ENCODE measurements at regions of chr6 and their contacts with region 1.

Region 1: GRCh38 chr6:129774697-129775447 is 64.9 kb upstream of the ARHGAP18 start:
- H3K4me3 ChIP-seq: peak overlapping the region; percentile 7; the same call in 1 of the 2 replicates
- H3K27ac ChIP-seq: no peak overlapping the region
- H3K4me1 ChIP-seq: no peaks in the 10 kb centered on the region
- CTCF ChIP-seq: peak; percentile 78

Region 2: DNA sequence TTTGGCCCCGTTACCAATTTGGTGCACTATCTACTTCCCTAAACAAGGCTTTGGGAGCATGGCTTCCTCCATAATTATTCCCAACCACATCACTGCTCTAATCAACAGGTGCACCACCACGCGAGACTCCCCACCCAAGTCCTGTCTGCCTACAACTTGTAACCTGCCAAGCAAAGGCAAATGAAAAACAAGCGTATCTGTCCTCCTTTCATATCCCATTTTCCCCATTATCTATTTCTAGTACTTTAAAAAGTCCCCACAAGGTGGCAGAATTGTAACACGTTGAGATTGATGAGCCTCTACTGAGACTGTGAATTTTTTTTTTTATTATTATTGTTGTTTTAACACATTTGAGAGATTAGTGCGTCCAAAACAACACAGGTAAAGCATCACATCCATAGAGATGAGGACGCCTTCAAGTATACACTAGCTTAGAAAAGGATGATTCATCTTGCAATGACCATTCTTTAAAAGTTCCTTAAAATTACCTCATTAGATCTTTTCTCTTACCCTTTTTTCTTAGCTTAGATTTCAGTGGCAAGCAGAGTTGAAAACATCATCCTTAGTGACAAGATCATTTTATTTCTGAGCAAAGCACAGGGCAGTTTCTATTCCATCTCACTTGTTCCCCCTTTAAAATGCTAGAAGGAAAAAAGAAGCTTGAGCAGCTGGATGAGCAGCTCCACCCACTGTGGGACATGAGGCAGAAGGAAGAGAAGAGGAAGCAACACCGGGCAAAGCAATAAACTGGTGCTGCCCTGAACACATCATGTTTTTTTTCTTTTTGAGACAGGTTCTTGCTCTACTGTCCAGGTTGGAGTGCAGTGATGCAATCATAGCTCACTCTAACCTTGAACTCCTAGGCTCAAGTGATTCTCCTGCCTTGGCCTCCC is 275.7 kb before region 1 on chr6:
- CTCF ChIA-PET with region 1: interaction called, 10 read pairs
- POLR2A ChIA-PET with region 1: no interaction called
- H3K4me3 ChIP-seq: no peak overlapping the region
- H3K27ac ChIP-seq: no peak overlapping the region
- H3K4me1 ChIP-seq: peaks cover 3% of the 10 kb centered on the region; the same call in 1 of the 2 replicates
- CTCF ChIP-seq: peak; percentile 30; the same call in 1 of the 2 replicates

Region 3: DNA sequence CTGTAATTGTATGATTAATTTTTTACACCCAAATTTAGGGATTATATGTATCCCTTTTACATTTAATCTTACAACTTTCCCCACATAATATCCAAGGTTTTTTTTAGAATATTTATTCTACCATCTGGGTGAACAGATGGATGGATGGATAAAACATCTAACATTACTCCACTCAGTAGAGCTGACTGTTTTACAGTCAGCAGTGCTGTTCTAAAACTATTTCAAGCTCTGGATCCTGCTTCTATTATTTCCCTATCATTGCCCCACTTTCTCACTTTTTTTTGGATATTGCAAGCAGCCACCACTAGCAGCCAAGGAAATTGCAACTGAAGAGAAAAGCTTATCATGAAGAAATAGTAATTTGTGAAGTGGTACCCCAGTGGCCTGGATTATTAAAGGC is 238.6 kb before region 1 on chr6:
- CTCF ChIA-PET with region 1: no interaction called
- POLR2A ChIA-PET with region 1: no interaction called
- H3K4me3 ChIP-seq: no peak overlapping the region
- H3K27ac ChIP-seq: no peak overlapping the region
- H3K4me1 ChIP-seq: peaks cover 3% of the 10 kb centered on the region; the same call in 1 of the 2 replicates
- CTCF ChIP-seq: no peak

Region 4: DNA sequence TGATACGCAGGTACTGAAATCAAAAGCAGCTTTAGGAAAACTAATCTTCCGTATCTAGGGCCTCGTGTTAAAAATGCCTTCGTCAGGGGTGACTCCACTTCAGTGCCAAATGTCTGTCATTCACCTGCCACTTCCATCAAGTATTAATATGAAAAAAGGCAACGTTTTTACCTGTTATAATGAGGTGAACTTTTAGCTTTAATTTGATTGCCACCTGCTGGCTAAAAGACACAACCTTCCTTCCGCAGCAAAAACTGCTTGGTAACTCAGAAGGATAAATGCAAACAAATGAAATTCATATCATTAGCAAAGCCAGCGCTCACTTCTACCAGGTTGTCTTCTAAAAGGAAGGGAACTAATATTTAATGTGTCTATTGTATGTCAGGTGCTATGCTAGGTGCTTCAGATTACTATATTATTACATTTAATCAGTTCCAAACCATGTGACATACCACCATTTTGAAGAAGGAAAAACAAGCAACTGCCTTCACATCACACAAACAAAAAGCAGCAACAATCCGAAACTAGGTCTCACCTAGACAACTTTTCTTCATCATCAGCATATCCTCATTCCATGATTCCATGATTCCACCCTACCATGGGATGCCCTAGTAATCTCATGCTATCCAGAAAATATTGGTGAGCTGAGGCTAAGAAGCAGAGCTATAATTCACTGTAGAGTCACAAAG is 44.3 kb before region 1 on chr6:
- CTCF ChIA-PET with region 1: interaction called, 43 read pairs
- POLR2A ChIA-PET with region 1: no interaction called
- H3K4me3 ChIP-seq: no peak overlapping the region
- H3K27ac ChIP-seq: no peak overlapping the region
- H3K4me1 ChIP-seq: no peaks in the 10 kb centered on the region
- CTCF ChIP-seq: 0 out of 2 replicates have a peak, but pooled peaks have one; percentile 32

Region 5: DNA sequence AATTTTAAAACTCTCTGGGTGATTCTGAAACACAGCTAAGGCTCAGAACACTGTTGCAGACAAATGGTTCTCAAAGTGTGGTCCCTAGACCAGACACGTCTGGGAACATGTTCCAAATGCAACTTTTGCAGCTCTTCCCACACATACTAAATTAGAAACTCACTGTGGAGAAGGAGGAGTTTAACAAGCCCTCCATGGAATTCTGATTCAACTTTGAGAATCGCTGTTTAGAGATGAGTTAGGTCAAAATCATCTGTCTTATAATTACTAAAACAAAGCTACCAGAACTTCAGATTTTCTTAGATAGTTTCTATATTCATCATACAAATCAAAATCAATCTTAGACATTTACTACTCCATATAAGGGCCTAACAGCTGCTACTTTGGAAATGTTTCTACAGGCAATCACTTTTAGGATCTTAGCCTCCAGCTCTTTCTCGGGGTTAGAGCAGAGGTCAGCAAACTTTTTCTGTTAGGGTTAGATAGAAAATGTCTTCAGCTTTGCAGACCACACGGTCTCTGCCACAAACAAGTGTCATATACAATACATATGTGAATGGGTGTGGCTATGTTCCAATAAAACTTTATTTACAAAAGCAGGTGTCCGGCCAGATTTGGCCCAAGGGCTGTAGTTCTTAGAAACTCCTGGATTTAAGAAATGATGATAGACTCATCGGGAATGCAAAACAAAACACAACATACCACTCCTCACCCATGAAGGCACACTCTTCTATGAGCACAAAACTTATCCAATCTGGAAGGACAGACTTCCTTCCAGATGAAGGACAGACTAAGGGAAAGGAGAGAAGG is 14.9 kb before region 1 on chr6:
- CTCF ChIA-PET with region 1: interaction called, 46 read pairs
- POLR2A ChIA-PET with region 1: no interaction called
- H3K4me3 ChIP-seq: no peak overlapping the region
- H3K27ac ChIP-seq: no peak overlapping the region
- H3K4me1 ChIP-seq: no peaks in the 10 kb centered on the region
- CTCF ChIP-seq: no peak

Region 6: DNA sequence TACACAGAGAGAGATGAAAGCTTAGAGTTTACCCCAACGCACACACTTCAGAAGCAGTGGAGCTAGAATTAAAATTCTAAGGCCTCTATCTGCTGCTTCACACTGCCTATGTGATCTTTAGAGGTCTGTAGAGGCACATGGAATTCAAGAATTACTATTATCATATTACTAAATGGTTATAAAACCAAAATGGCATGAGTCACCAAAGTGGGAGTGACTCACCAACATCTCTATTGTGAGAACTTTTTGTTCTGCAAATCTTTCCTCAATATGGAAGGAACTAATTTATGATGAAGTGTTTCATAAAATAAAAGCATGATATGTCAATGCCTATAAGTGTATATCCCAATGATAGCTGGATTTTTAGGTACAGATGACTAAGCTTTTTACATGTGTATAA is 114.7 kb after region 1 on chr6:
- CTCF ChIA-PET with region 1: interaction called, 12 read pairs
- POLR2A ChIA-PET with region 1: no interaction called
- H3K4me3 ChIP-seq: no peak overlapping the region
- H3K27ac ChIP-seq: no peak overlapping the region
- H3K4me1 ChIP-seq: no peaks in the 10 kb centered on the region
- CTCF ChIP-seq: no peak

Region 7: GRCh38 chr6:130020907-130021629 is 246.2 kb after region 1 on chr6:
- CTCF ChIA-PET with region 1: interaction called, 16 read pairs
- POLR2A ChIA-PET with region 1: no interaction called
- H3K4me3 ChIP-seq: peak overlapping the region; percentile 70
- H3K27ac ChIP-seq: no peak overlapping the region
- H3K4me1 ChIP-seq: no peaks in the 10 kb centered on the region
- CTCF ChIP-seq: peak; percentile 73; the same call in 1 of the 2 replicates

Region 8: GRCh38 chr6:130116273-130116672 is 341.4 kb after region 1 on chr6:
- CTCF ChIA-PET with region 1: no interaction called
- POLR2A ChIA-PET with region 1: no interaction called
- H3K4me3 ChIP-seq: no peak overlapping the region
- H3K27ac ChIP-seq: no peak overlapping the region
- H3K4me1 ChIP-seq: no peaks in the 10 kb centered on the region
- CTCF ChIP-seq: no peak

Region 9: GRCh38 chr6:130132286-130132701 is 357.4 kb after region 1 on chr6:
- CTCF ChIA-PET with region 1: no interaction called
- POLR2A ChIA-PET with region 1: no interaction called
- H3K4me3 ChIP-seq: no peak overlapping the region
- H3K27ac ChIP-seq: no peak overlapping the region
- H3K4me1 ChIP-seq: no peaks in the 10 kb centered on the region
- CTCF ChIP-seq: no peak